ENCODE measurements at regions of chr12 and their contacts with region 1.

Region 1: GRCh38 chr12:49842519-49843352 is at the start of gene BCDIN3D:
- DNase-seq: peak; percentile 90
- H3K4me3 Mint-ChIP-seq: peak within 1 kb of the TSS; percentile 94
- H3K27ac Mint-ChIP-seq: peak within 1 kb of the TSS; percentile 93
- H3K4me1 Mint-ChIP-seq: peaks cover 29% of the 10 kb centered on the region
- H3K27me3 Mint-ChIP-seq: no peaks in the 10 kb centered on the region
- total RNA-seq, gene BCDIN3D: 3.8 and 4.2 TPM in 2 replicates

Region 2: DNA sequence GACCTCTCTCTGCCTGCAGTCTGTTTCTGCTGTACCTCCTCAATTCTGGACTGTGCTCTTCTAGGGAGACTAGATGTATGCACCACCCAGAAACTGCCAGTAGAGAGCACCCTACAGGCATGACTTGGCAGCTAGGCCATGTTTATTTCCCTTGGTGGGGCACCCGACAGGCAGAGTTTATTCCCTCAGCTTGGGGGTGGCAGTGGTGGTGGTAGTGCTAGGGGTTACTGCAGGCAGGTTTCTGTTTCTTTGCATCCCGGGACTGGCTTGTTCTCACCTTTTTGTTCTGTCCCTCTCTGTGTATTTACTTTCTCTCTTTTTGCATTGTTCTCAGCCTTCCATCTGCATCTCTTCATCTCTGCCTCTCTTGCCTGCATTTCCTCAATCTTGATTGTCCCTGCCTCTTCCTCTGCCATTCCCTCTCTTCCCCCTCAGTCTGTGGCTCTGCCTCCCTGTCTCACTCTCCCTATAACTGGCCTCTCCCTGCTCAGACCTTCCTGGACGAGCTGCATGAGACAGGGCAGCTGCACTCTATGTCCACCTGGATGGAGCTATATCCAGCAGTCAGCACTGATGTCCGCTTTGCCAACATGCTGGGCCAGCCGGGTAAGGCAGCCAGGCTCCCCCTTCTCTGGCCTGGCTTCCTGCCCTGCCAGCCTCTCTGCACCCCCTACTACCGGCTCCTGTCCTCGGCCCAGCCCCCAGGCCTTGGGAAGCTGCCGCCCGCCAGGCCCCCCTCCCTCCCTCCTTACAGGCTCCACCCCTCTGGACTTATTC is 205.6 kb before region 1 on chr12:
- intact Hi-C with region 1: loop called (anchors 2 kb)
- DNase-seq: peak; percentile 49
- H3K4me3 Mint-ChIP-seq: no peak overlapping the region
- H3K27ac Mint-ChIP-seq: no peak overlapping the region
- H3K4me1 Mint-ChIP-seq: peaks cover 6% of the 10 kb centered on the region
- H3K27me3 Mint-ChIP-seq: no peaks in the 10 kb centered on the region

Region 3: DNA sequence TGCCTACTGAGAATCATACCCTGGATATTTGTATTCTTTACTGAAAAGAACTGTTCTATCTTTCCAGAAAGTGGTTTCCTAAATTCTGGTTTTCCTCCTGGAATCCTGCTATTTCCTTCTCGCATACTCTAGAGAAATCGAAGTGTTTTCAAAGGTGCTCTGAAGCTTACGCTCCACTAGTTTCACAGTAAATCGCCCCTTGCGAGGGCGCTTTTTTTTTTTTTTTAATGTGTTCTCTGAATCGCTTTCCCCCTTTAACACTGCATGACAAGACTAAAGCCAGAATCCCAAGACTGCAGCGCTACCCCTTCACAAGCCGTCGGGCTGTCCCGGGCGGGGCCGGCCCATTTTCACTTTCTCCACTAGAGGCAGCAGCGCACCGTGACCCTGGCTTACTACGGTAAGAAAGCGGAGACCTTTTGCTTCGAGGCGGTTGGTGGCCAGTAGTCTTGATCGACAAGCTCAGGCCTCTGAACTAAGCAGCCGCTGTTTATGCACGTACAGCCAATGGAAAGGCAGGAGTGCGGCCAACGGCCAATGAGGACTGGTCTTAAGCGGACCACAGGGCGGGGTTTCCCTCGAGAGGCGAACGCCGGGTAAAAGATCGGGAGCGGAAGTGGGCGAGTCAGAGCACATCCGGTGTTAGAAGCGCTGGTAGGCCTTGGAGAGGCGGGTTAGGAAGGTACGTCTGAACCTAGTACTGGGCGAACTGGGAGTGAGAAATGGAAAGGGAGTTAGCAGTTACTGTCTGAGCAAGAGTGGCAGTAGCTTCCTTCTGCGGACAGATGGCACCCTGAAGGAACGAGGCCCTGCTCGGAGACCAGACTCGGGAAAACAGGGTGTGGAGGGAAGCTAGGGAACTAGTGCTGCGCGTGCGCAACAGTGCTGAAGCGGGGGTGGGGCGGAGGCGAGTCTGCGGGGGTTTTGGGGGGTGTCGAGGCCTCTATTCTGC is 101.5 kb before region 1 on chr12 and contains the start of gene TMBIM6:
- intact Hi-C with region 1: loop called (anchors 1 kb)
- DNase-seq: peak; percentile 99
- H3K4me3 Mint-ChIP-seq: peak within 1 kb of the TSS; percentile 88
- H3K27ac Mint-ChIP-seq: peak within 1 kb of the TSS; percentile 96
- H3K4me1 Mint-ChIP-seq: peaks cover 27% of the 10 kb centered on the region
- H3K27me3 Mint-ChIP-seq: peaks cover 4% of the 10 kb centered on the region
- total RNA-seq, gene TMBIM6: 405 and 431 TPM in 2 replicates

Region 4: GRCh38 chr12:49763006-49763591 is 79.6 kb before region 1 on chr12:
- intact Hi-C with region 1: loop called (anchors 5 kb)
- DNase-seq: peak; percentile 72
- H3K4me3 Mint-ChIP-seq: peak overlapping the region; percentile 49
- H3K27ac Mint-ChIP-seq: peak overlapping the region; percentile 91
- H3K4me1 Mint-ChIP-seq: peaks cover 53% of the 10 kb centered on the region
- H3K27me3 Mint-ChIP-seq: no peaks in the 10 kb centered on the region

Region 5: DNA sequence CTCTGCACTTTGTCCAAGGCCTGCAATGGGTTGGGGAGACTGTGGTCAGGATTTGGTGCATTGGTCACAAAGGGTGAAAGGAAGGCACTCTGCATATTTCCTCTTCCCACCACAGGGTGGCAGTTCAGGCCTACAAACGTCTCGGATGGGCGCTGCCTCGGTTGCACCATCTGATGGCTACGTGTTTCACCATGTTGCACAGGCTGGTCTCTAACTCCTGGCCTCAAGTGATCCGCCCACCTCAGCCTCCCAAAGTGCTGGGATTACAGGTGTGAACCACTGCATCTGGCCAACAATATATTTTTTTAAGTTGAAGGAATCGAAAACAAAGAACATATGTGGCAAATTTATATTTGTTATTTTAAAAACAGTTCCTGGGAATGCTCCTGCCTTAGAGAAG is 66.3 kb before region 1 on chr12:
- intact Hi-C with region 1: loop called (anchors 1 kb)
- DNase-seq: peak; percentile 45
- H3K4me3 Mint-ChIP-seq: no peak overlapping the region
- H3K27ac Mint-ChIP-seq: peak overlapping the region; percentile 54
- H3K4me1 Mint-ChIP-seq: peaks cover 13% of the 10 kb centered on the region
- H3K27me3 Mint-ChIP-seq: peaks cover 20% of the 10 kb centered on the region

Region 6: GRCh38 chr12:49828133-49829091 is 14.3 kb before region 1 on chr12 and contains the start of gene NCKAP5L:
- intact Hi-C with region 1: loop called (anchors 1 kb)
- DNase-seq: peak; percentile 88
- H3K4me3 Mint-ChIP-seq: peak within 1 kb of the TSS; percentile 93
- H3K27ac Mint-ChIP-seq: peak within 1 kb of the TSS; percentile 83
- H3K4me1 Mint-ChIP-seq: peaks cover 10% of the 10 kb centered on the region
- H3K27me3 Mint-ChIP-seq: peaks cover 12% of the 10 kb centered on the region
- total RNA-seq, gene NCKAP5L: 5.3 and 5.7 TPM in 2 replicates

Region 7: DNA sequence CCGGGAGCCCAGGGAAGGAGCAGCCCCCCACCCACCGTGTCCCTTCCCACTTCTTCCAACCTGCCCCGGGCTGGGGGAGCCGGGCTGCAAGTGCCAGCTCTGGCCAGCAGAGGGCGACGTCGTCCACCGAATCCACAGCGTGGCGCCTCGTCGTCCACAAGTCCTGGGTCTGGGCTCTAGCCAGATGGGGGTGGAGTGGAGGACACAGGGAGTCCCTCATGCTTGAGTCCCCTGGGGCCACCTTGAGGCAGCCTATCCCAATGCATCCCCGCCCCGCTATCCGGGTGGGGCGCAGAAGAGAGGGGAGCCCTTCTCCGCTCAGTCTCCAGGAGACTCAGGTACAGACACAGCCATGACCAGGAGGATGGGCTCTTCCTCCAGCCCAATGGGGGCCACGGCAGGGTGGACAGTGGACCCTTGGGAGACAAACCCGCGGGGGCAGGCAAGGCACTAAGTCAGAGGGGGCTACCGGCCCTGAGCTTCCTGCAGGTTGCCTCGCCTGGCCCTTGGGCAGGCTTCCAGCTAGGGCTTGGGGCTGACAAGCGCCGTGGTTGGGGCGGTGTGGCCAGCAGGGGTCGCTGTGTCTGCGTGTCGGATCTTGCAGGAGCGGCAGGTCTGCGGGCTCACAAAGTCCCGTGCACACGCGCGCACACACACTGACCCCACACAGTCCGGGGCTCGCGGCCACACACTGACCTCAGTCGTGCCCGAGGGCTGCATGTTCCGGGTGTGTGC is 124.5 kb after region 1 on chr12:
- intact Hi-C with region 1: no loop called
- DNase-seq: peak; percentile 86
- H3K4me3 Mint-ChIP-seq: peak overlapping the region; percentile 63
- H3K27ac Mint-ChIP-seq: no peak overlapping the region
- H3K4me1 Mint-ChIP-seq: peaks cover 6% of the 10 kb centered on the region
- H3K27me3 Mint-ChIP-seq: peaks cover 32% of the 10 kb centered on the region